Activated CD8-positive, alpha-beta T cell treated with anti-CD3 and anti-CD28 coated beads, Interleukin-2, amount 10 ng/mL, durations not matched to agents 7 days and 5 days (primary cell): ENCODE measurements at regions of chr4 and their contacts with region 1.

Region 1: DNA sequence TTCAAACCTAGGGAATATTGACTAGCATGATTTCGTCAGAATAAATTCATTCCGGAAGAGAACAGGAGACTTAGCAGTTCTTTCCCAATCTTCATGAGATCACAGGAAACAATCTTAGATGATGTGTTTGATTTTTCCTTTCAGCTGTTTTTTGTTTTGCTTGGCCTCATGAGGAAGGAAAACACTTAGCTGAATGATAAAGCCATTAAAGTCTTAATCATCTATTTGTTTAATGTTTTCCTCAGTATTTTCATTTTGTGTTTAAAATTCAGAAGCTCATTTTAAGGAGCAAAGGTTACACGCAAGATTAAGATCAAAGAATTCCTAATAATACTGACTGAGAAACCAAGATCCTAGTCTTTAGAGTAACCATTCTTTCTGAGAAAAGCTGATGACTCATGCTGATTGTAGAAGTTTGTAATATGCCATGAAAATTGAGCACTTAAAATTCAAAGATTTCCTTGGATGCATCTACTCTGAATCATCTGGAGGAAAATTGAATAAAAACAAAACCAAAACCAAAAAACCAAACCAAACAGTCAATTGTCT is 15.4 kb upstream of the TBC1D19 start:
- DNase-seq: no peak
- ATAC-seq: no peak
- H3K4me3 Mint-ChIP-seq: no peak overlapping the region
- H3K27ac Mint-ChIP-seq: no peak overlapping the region
- H3K4me1 Mint-ChIP-seq: peaks cover 7% of the 10 kb centered on the region
- H3K27me3 Mint-ChIP-seq: peaks cover 3% of the 10 kb centered on the region

Region 2: DNA sequence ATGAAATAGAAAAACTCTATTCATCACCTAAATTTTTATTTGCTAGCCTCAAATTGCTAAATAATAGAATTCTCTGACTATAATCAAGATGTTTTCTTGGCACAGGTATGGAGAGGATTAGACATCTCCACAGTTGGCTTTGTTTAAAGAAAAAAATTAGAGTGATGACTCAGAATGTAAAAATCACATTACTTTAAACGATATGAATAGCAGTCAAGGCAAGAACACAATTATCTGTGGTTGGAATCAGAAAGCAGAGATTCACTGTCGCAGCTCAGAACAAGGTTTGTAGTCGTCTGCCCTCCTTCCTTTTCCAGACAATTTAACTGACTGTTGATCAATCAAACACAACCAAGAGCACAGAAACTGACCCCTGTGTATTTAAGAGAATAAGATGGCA is 46.0 kb before region 1 on chr4:
- CTCF ChIA-PET with region 1: no interaction called
- POLR2A ChIA-PET with region 1: no interaction called
- DNase-seq: no peak
- ATAC-seq: no peak
- H3K4me3 Mint-ChIP-seq: no peak overlapping the region
- H3K27ac Mint-ChIP-seq: no peak overlapping the region
- H3K4me1 Mint-ChIP-seq: no peaks in the 10 kb centered on the region
- H3K27me3 Mint-ChIP-seq: peaks cover 6% of the 10 kb centered on the region

Region 3: GRCh38 chr4:26583865-26584652 is 15.5 kb after region 1 on chr4 and contains the start of gene TBC1D19:
- CTCF ChIA-PET with region 1: interaction called, 10 read pairs
- POLR2A ChIA-PET with region 1: interaction called, 6 read pairs
- DNase-seq: peak; percentile 92
- ATAC-seq: peak; percentile 100
- H3K4me3 Mint-ChIP-seq: peak within 1 kb of the TSS; percentile 96
- H3K27ac Mint-ChIP-seq: peak within 1 kb of the TSS; percentile 87
- H3K4me1 Mint-ChIP-seq: peaks cover 24% of the 10 kb centered on the region
- H3K27me3 Mint-ChIP-seq: no peaks in the 10 kb centered on the region
- total RNA-seq, gene TBC1D19: 4.7 to 5.7 TPM